HCT116 (cell line): ENCODE measurements at regions of chr2 and their contacts with region 1.

Region 1: GRCh38 chr2:168118733-168119514 is 128.5 kb downstream of the STK39 start:
- DNase-seq: peak; percentile 21
- ATAC-seq: peak; percentile 66
- H3K4me3 ChIP-seq: no peak overlapping the region
- H3K27ac ChIP-seq: peak overlapping the region; percentile 13; the same call in 1 of the 2 replicates
- H3K4me1 ChIP-seq: no peaks in the 10 kb centered on the region
- H3K27me3 ChIP-seq: no peaks in the 10 kb centered on the region
- CTCF ChIP-seq: peak; percentile 35 to 72 (median 63); a peak in 5 of 6 replicates
- POLR2A ChIP-seq: no peak
- RAD21 ChIP-seq: peak; percentile 60

Region 2: GRCh38 chr2:166539340-166540162 is 1579.4 kb before region 1 on chr2:
- CTCF ChIA-PET with region 1: interaction called, 23 read pairs
- POLR2A ChIA-PET with region 1: no interaction called
- RAD21 ChIA-PET with region 1: no interaction called
- intact Hi-C with region 1: loop called (anchors 1 kb)
- DNase-seq: peak; percentile 51
- ATAC-seq: peak; percentile 93
- H3K4me3 ChIP-seq: no peak overlapping the region
- H3K27ac ChIP-seq: no peak overlapping the region
- H3K4me1 ChIP-seq: no peaks in the 10 kb centered on the region
- H3K27me3 ChIP-seq: no peaks in the 10 kb centered on the region
- CTCF ChIP-seq: peak; percentile 51 to 79 (median 65); a peak in 5 of 6 replicates
- POLR2A ChIP-seq: no peak
- RAD21 ChIP-seq: peak; percentile 81

Region 3: DNA sequence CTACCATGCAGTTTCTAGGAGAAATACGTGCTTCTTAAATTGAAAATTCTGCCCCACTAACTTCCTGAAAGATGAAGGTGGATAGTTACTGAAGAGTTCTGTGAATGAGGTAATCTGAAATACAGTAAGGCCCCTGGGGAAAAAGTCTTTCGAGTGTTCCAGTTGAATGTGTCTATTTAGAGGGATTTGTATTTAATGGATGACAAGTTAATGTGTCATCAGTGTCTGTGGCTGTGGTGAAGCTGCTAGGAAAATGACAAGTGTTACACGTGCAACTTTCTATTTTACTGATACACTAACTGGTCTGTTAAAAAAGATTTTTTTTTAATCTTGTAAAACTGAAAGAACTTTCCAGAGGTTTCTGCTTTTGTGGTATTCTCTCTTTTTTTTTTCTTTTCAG is 256.1 kb before region 1 on chr2:
- CTCF ChIA-PET with region 1: no interaction called
- POLR2A ChIA-PET with region 1: no interaction called
- RAD21 ChIA-PET with region 1: no interaction called
- intact Hi-C with region 1: loop called (anchors 10 kb)
- DNase-seq: no peak
- ATAC-seq: no peak
- H3K4me3 ChIP-seq: no peak overlapping the region
- H3K27ac ChIP-seq: no peak overlapping the region
- H3K4me1 ChIP-seq: no peaks in the 10 kb centered on the region
- H3K27me3 ChIP-seq: peaks cover 20% of the 10 kb centered on the region; the same call in 1 of the 2 replicates
- CTCF ChIP-seq: no peak
- POLR2A ChIP-seq: no peak
- RAD21 ChIP-seq: no peak

Region 4: DNA sequence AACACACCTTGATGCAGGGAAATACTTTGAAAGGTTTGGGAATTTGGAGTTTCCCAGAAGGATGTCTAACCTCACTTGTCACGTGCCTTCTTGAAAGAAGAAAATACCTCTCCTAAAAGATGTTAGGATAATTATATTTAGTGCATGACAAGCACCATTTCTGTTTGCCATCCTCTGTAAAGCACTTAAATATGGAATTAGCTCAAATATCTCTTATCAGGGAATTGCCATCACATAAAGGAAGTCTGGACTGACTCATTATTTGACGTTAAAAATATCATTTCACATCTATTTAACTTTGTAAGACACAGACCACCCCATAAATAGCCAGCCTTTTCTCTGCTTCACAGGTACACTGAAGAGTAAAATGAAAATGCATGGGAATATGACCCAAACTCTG is 11.6 kb before region 1 on chr2:
- CTCF ChIA-PET with region 1: interaction called, 13 read pairs
- POLR2A ChIA-PET with region 1: no interaction called
- RAD21 ChIA-PET with region 1: no interaction called
- intact Hi-C with region 1: no loop called
- DNase-seq: no peak
- ATAC-seq: no peak
- H3K4me3 ChIP-seq: no peak overlapping the region
- H3K27ac ChIP-seq: no peak overlapping the region
- H3K4me1 ChIP-seq: no peaks in the 10 kb centered on the region
- H3K27me3 ChIP-seq: no peaks in the 10 kb centered on the region
- CTCF ChIP-seq: no peak
- POLR2A ChIP-seq: no peak
- RAD21 ChIP-seq: no peak

Region 5: GRCh38 chr2:168336864-168337263 is 217.9 kb after region 1 on chr2:
- CTCF ChIA-PET with region 1: interaction called, 19 read pairs
- POLR2A ChIA-PET with region 1: interaction called, 3 read pairs
- RAD21 ChIA-PET with region 1: interaction called in 1 of 2 experiments, 3 read pairs
- intact Hi-C with region 1: no loop called
- DNase-seq: peak; percentile 87
- ATAC-seq: peak; percentile 100
- H3K4me3 ChIP-seq: peak overlapping the region in 1 of 2 experiments; percentile 0; a peak in 1 of 4 replicates
- H3K27ac ChIP-seq: no peak overlapping the region
- H3K4me1 ChIP-seq: peaks cover 0 to 17% of the 10 kb centered on the region in 2 experiments; a peak in 2 of 4 replicates
- H3K27me3 ChIP-seq: no peaks in the 10 kb centered on the region
- CTCF ChIP-seq: peak; percentile 74 to 83 (median 78); a peak in 5 of 6 replicates
- POLR2A ChIP-seq: no peak
- RAD21 ChIP-seq: peak; percentile 91